Activated T-helper 1 cell treated with anti-CD3 and anti-CD28 coated beads, Interleukin-12 subunit alpha, Interleukin-12 subunit beta, Interleukin-2, Interleukin-4 antibody, amounts not matched to agents 30 ng/mL and 10 ng/mL and 1 ng/mL, durations not matched to agents 14 hours and 24 hours and 36 hours (primary cell): ENCODE measurements at regions of chrX and their contacts with region 1.

Region 1: GRCh38 chrX:24169211-24169610 is 19.7 kb downstream of the ZFX start:
- DNase-seq: no peak
- H3K4me3 Mint-ChIP-seq: peak overlapping the region; percentile 32
- H3K27ac Mint-ChIP-seq: peak overlapping the region; percentile 82
- H3K4me1 Mint-ChIP-seq: peaks cover 40% of the 10 kb centered on the region
- H3K27me3 Mint-ChIP-seq: no peaks in the 10 kb centered on the region

Region 2: GRCh38 chrX:24081661-24082264 is 87.4 kb before region 1 on chrX:
- intact Hi-C with region 1: loop called (anchors 1 kb)
- DNase-seq: peak; percentile 21
- H3K4me3 Mint-ChIP-seq: peak overlapping the region; percentile 11
- H3K27ac Mint-ChIP-seq: no peak overlapping the region
- H3K4me1 Mint-ChIP-seq: peaks cover 13% of the 10 kb centered on the region
- H3K27me3 Mint-ChIP-seq: no peaks in the 10 kb centered on the region

Region 3: GRCh38 chrX:24241822-24242648 is 72.8 kb after region 1 on chrX:
- intact Hi-C with region 1: loop called (anchors 5 kb)
- DNase-seq: no peak
- H3K4me3 Mint-ChIP-seq: no peak overlapping the region
- H3K27ac Mint-ChIP-seq: no peak overlapping the region
- H3K4me1 Mint-ChIP-seq: peaks cover 8% of the 10 kb centered on the region
- H3K27me3 Mint-ChIP-seq: peaks cover 2% of the 10 kb centered on the region

Region 4: DNA sequence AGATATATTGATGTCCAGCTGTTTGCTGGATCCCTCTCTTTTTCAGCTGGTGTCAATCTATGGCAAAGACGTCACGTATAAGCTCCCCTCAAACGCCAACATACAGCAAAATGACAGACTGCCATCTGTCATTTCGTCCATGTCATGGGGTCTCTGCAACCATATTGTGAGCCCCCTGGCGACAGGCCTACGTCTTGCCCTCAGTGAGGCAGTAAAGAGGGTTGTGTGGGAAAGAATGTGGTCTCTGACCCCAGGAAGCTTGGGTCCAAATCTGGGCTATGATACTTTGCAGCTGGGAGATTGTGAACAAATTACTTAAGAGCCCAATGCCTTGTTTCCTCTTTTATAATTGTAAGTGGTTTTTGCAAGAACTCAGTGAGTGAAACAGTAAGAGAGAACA is 137.2 kb after region 1 on chrX:
- intact Hi-C with region 1: no loop called
- DNase-seq: no peak
- H3K4me3 Mint-ChIP-seq: no peak overlapping the region
- H3K27ac Mint-ChIP-seq: no peak overlapping the region
- H3K4me1 Mint-ChIP-seq: peaks cover 24% of the 10 kb centered on the region
- H3K27me3 Mint-ChIP-seq: no peaks in the 10 kb centered on the region